ENCODE measurements at regions of chr6 and their contacts with region 1.

Region 1: DNA sequence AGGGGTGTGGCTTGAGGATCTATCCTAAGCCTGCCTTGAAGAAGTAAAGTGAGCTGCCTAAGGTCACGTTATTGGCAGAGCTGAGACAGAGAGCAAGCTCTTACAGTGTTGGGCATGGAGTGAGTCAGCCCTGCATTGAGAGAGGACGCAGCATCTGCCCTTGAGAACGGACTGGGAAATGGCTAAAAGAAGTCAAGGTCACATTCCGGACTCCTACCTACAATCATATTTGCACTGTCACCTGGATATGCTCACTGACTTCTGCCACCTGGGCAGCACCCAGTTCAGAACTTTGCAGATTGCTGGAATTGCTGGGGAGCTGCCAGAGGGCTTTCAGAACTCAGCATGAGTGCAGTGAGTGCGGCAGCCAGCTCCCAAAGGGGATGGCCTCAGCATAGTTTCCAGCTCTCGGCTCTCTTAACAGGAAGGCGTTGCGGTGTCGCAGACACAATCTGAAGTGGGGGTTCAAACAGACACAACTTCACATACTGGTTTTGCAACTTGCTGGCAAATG is 199.3 kb upstream of the SGK1 start:
- DNase-seq: peak; percentile 67 to 70
- H3K4me3 ChIP-seq: no peak overlapping the region
- H3K27ac ChIP-seq: no peak overlapping the region
- H3K4me1 ChIP-seq: no peaks in the 10 kb centered on the region
- H3K27me3 ChIP-seq: no peaks in the 10 kb centered on the region
- CTCF ChIP-seq: no peak

Region 2: GRCh38 chr6:134111062-134111677 is 406.0 kb before region 1 on chr6:
- CTCF ChIA-PET with region 1: interaction called, 16 read pairs
- POLR2A ChIA-PET with region 1: no interaction called
- intact Hi-C with region 1: no loop called
- DNase-seq: peak; percentile 15 to 59
- H3K4me3 ChIP-seq: no peak overlapping the region
- H3K27ac ChIP-seq: no peak overlapping the region
- H3K4me1 ChIP-seq: 0 out of 2 replicates have a peak, but pooled peaks cover 3% of the 10 kb centered on the region
- H3K27me3 ChIP-seq: no peaks in the 10 kb centered on the region
- CTCF ChIP-seq: peak; percentile 95

Measured in PC-9 (cell line).